ENCODE measurements at regions of chr9 and their contacts with region 1.

Region 1: DNA sequence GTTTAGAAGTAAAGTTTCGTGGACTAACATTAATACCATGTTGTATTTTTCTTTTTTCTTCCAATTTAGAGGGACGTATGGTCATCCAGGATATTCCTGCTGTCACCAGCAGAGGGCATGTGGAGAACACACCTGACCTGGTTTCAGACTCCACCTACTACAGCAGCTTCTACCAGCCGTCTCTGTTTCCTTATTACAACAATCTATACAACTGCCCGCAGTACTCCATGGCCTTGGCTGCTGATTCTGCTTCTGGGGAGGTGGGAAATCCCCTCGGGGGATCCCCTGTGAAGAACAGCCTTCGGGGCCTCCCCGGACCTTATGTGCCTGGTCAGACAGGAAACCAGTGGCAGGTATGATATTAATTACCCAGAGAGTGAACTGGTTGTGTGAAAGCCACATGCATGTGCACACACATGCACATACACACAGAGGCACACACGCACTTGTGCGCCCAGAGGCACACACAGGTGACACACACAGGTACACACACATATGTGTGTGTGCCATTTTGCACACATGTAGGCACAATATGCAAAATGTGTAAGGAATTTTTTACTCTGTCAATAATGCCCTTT is 52.4 kb downstream of the DMRT1 start:
- DNase-seq: peak; percentile 87
- CTCF ChIP-seq: peak; percentile 83

Region 2: DNA sequence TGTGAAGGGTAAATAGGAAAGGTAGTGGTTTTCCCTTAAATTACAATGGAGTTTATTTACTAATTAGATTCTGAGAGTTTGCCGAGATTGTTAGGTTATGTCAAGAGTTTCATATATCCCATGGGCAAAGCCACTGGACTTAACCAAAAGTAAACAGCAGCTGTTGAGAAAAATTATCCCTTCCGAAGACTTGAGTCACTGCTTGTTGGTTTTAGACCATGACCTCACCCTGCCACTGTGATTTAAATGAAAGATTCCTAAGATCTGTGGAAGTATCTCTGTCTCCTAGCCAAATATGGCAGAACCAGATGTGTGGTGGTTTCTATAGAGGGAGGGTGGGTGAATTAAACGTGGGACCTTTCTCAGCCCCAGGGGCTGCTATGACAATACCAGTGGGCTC is 101.8 kb after region 1 on chr9:
- in situ Hi-C with region 1: loop called (anchors 5 kb)
- DNase-seq: no peak
- CTCF ChIP-seq: no peak

Region 3: DNA sequence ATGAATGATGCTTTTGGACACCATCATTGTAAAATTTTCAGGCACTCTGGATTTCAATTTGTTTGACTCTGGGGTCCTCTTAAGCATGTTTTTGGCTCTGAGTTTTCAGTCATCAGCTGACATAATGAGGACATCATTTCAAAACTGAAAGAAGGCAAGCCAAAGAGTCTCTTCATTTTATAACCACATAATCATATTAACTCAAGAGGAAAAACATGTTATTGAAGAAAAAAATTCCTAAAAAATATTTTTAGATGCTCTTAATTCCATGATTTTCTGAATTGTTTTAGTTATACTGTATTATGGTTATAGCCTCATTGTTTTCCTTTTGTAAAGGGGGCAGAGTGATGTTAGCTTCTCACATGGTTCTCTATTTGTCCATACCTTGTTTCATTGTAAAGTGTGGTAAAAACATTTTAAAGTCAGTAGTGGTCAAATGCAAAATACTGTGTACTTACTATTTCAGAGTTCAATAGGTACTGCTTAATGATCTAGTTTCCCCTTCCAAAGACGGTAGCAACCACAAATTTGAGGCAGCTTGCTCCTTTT is 628.4 kb after region 1 on chr9:
- in situ Hi-C with region 1: no loop called
- DNase-seq: peak; percentile 12
- CTCF ChIP-seq: no peak

Measured in GM13976 (cell line).